ENCODE measurements at regions of chr2 and their contacts with region 1.

Region 1: DNA sequence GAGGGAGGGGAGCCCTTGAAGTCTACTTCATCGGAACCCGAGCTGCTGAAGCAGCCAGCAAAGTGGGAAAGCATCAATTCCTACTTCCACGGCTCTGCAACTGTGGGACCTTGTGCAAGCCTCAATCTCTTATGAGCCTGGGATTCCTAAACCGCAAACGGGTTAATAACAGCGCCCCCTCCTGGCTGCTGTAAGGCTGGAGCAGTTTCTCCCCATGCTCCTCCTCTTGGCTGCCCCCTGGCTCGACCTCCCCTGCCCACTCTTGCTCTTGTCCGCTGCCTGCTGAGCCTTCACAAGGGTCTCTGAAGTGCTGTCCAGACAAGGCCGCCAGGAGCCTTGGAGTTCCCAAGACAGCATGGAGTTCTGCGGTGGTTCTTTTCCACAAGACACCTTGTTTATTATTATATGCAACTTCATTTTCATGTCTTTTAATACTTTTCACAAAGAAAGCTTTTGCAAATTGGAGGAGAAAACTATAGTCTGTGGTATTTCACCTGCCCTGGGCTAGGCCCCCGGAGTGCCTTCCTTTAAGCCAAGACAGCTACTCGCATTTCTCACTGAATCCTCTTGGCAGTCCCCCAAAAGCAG is 157.2 kb downstream of the DDX1 start:
- DNase-seq: no peak
- H3K4me3 ChIP-seq: no peak overlapping the region
- H3K27ac ChIP-seq: no peak overlapping the region
- H3K4me1 ChIP-seq: peaks cover 16% of the 10 kb centered on the region
- H3K27me3 ChIP-seq: peaks cover 0 to 2% of the 10 kb centered on the region in 2 experiments
- CTCF ChIP-seq: peak; percentile 51
- POLR2A ChIP-seq: no peak

Region 2: DNA sequence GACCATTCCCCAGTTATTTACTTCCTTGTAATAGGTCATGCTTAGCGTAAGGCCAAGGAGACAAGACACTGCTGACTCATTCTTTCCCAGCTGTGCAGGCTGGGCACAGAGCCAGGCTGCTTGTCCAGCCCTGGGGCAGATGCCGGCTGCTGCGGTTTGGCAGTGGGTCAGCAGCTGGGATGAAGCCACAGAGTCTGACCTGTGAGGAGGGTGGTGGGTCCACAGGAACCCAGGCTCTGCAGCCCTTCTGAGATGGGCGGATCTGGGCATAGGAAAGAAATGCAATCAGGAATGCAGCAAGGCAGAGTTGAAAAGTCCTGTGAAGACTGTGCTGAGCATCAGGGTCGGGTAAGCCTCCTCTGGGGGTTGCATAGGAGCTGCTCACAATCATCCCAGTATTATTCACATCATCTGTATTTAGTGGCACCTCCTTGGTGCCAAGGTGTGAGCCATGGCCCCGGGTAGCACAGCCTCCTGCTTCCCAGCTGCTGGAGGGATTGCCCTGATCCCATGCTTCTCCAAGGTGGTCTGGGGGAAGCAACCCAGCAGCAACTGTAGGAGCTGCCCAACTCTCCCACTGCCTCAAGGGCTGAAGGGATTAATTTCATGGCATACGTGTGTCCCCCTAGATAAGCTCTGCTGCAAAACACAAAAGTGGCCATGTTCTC is 18.2 kb before region 1 on chr2:
- CTCF ChIA-PET with region 1: interaction called, 8 read pairs
- POLR2A ChIA-PET with region 1: no interaction called
- dilution Hi-C with region 1: no loop called
- intact Hi-C with region 1: loop called (anchors 1 kb)
- DNase-seq: peak; percentile 97
- H3K4me3 ChIP-seq: no peak overlapping the region
- H3K27ac ChIP-seq: peak overlapping the region; percentile 24
- H3K4me1 ChIP-seq: peaks cover 31% of the 10 kb centered on the region
- H3K27me3 ChIP-seq: peaks cover 0 to 1% of the 10 kb centered on the region in 2 experiments
- CTCF ChIP-seq: no peak
- POLR2A ChIP-seq: peak; percentile 24

Region 3: DNA sequence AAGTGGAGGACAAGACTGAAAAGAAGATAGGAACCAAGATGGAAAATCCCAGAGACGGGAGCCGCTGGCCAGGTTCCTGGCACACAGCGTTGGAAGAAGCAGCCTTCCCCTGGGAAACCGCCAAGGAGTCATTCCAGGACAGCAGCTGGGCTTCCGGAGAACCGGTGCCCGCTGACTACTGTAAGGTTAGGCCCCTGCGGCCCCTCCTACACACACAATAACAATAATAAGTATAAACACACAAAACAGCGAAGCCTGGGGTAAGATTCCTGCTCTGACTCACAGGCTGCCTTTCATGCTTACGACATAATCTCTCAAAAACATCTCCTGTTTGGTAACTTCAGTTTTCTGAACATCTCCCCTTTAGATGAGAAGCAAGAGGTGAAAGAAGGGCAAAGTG is 163.4 kb after region 1 on chr2:
- CTCF ChIA-PET with region 1: no interaction called
- POLR2A ChIA-PET with region 1: no interaction called
- dilution Hi-C with region 1: no loop called
- intact Hi-C with region 1: loop called (anchors 10 kb)
- DNase-seq: peak; percentile 88
- H3K4me3 ChIP-seq: no peak overlapping the region
- H3K27ac ChIP-seq: no peak overlapping the region
- H3K4me1 ChIP-seq: no peaks in the 10 kb centered on the region
- H3K27me3 ChIP-seq: no peaks in the 10 kb centered on the region
- CTCF ChIP-seq: no peak
- POLR2A ChIP-seq: no peak

Region 4: GRCh38 chr2:16081316-16082200 is 332.7 kb after region 1 on chr2:
- CTCF ChIA-PET with region 1: no interaction called
- POLR2A ChIA-PET with region 1: no interaction called
- dilution Hi-C with region 1: no loop called
- intact Hi-C with region 1: no loop called
- DNase-seq: no peak
- H3K4me3 ChIP-seq: no peak overlapping the region
- H3K27ac ChIP-seq: no peak overlapping the region
- H3K4me1 ChIP-seq: no peaks in the 10 kb centered on the region
- H3K27me3 ChIP-seq: no peaks in the 10 kb centered on the region
- CTCF ChIP-seq: no peak
- POLR2A ChIP-seq: no peak

Region 5: GRCh38 chr2:16507655-16508489 is 759.0 kb after region 1 on chr2:
- CTCF ChIA-PET with region 1: no interaction called
- POLR2A ChIA-PET with region 1: no interaction called
- dilution Hi-C with region 1: no loop called
- intact Hi-C with region 1: loop called (anchors 5 kb)
- DNase-seq: peak; percentile 39
- H3K4me3 ChIP-seq: peak overlapping the region in 1 of 3 experiments; percentile 16
- H3K27ac ChIP-seq: no peak overlapping the region
- H3K4me1 ChIP-seq: no peaks in the 10 kb centered on the region
- H3K27me3 ChIP-seq: peaks cover 19 to 27% of the 10 kb centered on the region in 2 experiments
- CTCF ChIP-seq: peak; percentile 47 to 80
- POLR2A ChIP-seq: no peak

Region 6: GRCh38 chr2:16525265-16525887 is 776.5 kb after region 1 on chr2:
- CTCF ChIA-PET with region 1: no interaction called
- POLR2A ChIA-PET with region 1: no interaction called
- dilution Hi-C with region 1: no loop called
- intact Hi-C with region 1: no loop called
- DNase-seq: peak; percentile 25
- H3K4me3 ChIP-seq: no peak overlapping the region
- H3K27ac ChIP-seq: no peak overlapping the region
- H3K4me1 ChIP-seq: no peaks in the 10 kb centered on the region
- H3K27me3 ChIP-seq: peaks cover 2 to 9% of the 10 kb centered on the region in 2 experiments
- CTCF ChIP-seq: peak; percentile 61 to 62
- POLR2A ChIP-seq: no peak

Region 7: DNA sequence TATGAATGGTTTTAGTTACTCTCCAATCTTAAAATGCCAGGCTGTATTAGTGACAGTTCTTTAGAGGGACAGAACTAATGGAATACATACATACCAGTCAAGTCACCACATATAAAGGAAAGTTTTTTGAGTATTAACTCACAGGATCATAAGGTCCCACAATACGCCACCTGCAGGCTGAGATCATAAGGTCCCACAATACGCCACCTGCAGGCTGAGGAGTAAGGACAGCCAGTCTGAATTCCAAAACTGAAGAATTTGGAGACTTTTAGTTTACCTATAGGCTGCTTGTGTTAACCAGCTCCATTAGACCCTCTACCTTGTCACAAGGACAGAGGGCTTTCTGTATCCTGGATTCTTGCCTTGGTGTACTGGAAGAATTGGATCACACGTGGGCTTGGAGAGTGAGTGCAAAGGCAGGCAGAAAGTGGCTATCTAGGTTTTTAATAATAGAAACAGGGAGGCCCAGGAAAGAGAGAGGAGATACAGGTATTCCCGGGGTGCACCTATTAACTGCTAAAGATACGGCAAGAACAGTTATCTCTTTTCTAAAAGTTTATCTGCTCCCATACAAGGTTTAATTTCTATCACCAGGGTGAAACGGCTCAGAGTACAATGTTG is 1151.7 kb after region 1 on chr2:
- CTCF ChIA-PET with region 1: no interaction called
- POLR2A ChIA-PET with region 1: no interaction called
- dilution Hi-C with region 1: no loop called
- intact Hi-C with region 1: no loop called
- DNase-seq: no peak
- H3K4me3 ChIP-seq: no peak overlapping the region
- H3K27ac ChIP-seq: no peak overlapping the region
- H3K4me1 ChIP-seq: no peaks in the 10 kb centered on the region
- H3K27me3 ChIP-seq: no peaks in the 10 kb centered on the region
- CTCF ChIP-seq: peak; percentile 13 to 26
- POLR2A ChIP-seq: no peak